SK-N-SH (cell line): ENCODE measurements at regions of chr7 and their contacts with region 1.

Region 1: DNA sequence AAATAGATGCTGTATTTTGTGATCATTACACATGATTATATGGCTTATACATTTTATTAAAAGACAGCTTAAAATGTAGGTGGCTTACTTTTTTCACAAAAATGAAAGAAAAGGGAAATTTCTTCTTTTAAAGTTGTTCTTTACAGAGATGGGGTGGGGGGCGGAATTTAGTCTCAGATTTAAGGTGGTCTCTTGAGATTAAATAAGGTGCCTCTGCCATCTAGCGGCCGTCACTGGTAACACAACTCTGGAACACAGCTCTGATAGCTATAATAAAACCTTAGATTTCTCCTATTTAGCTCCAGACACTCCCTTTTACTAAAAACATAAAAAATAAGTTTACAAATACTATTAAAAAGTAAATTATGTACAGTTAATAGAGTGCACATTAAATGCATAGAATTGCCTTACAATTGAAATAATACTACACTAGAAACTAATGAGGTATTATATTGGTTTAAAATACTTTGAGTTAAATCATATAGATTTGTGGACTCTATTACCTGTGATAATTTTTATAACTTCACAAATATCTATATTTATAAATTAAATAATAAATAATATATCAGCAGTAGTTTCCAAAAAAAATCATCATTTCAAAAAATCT is 210.9 kb downstream of the DGKB start:
- DNase-seq: peak; percentile 59
- H3K4me3 ChIP-seq: no peak overlapping the region; a peak in 1 of 4 replicates
- H3K27ac ChIP-seq: no peak overlapping the region
- H3K4me1 ChIP-seq: peaks cover 0 to 29% of the 10 kb centered on the region in 2 experiments; a peak in 3 of 4 replicates
- H3K27me3 ChIP-seq: no peaks in the 10 kb centered on the region
- CTCF ChIP-seq: peak; percentile 100
- EP300 ChIP-seq: no peak
- RAD21 ChIP-seq: peak; percentile 95

Region 2: GRCh38 chr7:13476881-13477444 is 1214.7 kb before region 1 on chr7:
- CTCF ChIA-PET with region 1: interaction called, 10 read pairs
- POLR2A ChIA-PET with region 1: no interaction called
- DNase-seq: no peak
- H3K4me3 ChIP-seq: no peak overlapping the region
- H3K27ac ChIP-seq: no peak overlapping the region
- H3K4me1 ChIP-seq: no peaks in the 10 kb centered on the region
- H3K27me3 ChIP-seq: no peaks in the 10 kb centered on the region
- CTCF ChIP-seq: peak; percentile 32
- EP300 ChIP-seq: no peak
- RAD21 ChIP-seq: peak; percentile 36

Region 3: DNA sequence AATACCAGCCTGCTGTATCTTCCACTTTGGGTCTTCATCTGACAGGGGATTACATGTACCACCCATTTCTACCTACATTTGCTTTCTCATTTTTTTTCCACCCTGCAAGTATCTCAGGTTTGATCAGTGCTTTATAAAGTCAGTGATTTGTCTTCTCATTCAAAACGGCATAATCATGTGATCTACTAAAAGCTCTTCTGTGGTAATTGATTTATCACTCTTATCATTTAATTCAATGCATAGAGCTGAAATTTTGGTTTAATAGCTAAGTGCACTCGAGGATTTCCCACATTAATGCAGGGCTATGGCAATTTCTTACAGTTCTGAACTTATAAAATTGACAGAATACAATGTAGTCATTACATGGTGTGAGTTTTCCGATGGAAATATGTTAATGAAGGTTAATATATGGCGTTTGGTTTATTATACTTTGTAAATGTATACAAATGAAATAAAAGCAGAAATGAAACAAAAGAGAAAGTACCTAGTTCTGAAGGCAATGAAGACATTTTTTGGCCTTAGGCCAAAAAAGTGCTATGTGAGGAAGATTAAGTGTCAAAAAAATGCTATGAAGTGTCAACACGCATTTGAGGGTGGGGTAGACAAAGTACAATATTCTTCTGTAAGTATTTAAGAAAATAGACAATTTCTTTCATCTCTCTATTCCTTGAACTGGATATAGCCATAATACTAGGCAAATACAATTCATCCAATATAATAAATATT is 1159.5 kb before region 1 on chr7:
- CTCF ChIA-PET with region 1: interaction called, 18 read pairs
- POLR2A ChIA-PET with region 1: no interaction called
- DNase-seq: peak; percentile 1
- H3K4me3 ChIP-seq: no peak overlapping the region
- H3K27ac ChIP-seq: no peak overlapping the region
- H3K4me1 ChIP-seq: peaks cover 0 to 6% of the 10 kb centered on the region in 2 experiments; a peak in 1 of 4 replicates
- H3K27me3 ChIP-seq: no peaks in the 10 kb centered on the region
- CTCF ChIP-seq: no peak
- EP300 ChIP-seq: peak in 1 of 2 experiments; percentile 13; a peak in 1 of 4 replicates
- RAD21 ChIP-seq: no peak

Region 4: DNA sequence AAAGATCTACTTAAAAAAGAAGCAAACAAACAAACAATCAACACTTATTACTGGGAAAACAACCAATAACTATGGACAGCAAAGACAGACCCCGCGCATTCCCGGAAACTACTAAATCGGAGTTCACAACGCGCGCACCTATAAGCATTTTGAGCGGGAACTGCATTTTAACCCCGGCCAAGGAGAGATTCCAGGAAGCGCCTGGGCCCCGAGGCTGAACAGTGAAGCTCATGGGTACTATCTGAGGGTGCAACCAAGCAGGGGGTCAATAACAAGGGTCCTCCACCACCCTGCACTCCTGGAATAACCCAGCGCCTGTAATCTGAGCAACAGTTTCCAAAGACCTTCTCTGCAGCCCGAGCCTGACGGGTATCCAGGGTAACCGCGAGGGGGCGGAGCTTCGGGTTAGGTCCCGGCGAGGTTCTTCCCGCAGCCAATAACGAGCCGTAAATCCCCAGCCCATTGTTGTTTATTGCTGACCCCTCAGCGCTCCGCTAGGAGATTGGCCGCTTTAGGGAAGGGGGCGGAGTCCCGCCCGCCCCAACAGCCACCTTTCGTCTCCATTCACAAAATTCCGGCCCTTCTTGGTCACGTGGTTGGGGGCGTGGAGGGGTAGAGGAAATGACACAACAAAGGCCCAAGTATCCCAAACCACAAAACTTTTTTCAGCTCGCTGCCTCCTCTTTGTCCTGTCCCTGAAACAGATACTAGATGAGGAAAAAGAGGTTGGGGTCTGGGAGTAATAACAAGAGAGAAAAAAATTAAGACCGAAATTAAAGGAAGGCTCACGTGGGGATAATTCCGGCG is 700.5 kb before region 1 on chr7:
- CTCF ChIA-PET with region 1: interaction called, 34 read pairs
- POLR2A ChIA-PET with region 1: no interaction called
- DNase-seq: peak; percentile 92
- H3K4me3 ChIP-seq: peak overlapping the region; percentile 91 to 100
- H3K27ac ChIP-seq: peak overlapping the region; percentile 91 to 96
- H3K4me1 ChIP-seq: peaks cover 3 to 22% of the 10 kb centered on the region in 2 experiments; a peak in 2 of 4 replicates
- H3K27me3 ChIP-seq: no peaks in the 10 kb centered on the region
- CTCF ChIP-seq: no peak
- EP300 ChIP-seq: peak in 1 of 2 experiments; percentile 36; a peak in 1 of 4 replicates
- RAD21 ChIP-seq: no peak

Region 5: DNA sequence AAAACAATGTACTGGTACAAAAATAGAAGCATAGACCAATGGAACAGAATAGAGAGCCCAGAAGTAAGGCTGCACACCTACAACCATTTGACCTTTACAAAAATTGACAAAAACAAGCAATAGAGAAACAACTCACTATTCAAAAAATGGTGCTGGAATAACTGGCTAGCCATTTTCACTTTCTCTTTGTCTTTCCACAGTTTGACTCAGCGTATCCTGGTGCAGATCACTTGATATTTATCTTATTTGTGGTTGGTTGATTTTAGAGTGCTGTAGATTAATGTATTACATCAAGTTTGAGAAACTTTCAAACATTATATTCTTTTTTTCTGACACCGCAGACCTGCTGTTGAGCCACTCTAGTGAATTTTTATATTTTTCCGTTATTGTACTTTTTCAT is 170.5 kb before region 1 on chr7:
- CTCF ChIA-PET with region 1: no interaction called
- POLR2A ChIA-PET with region 1: no interaction called
- DNase-seq: no peak
- H3K4me3 ChIP-seq: no peak overlapping the region
- H3K27ac ChIP-seq: no peak overlapping the region
- H3K4me1 ChIP-seq: no peaks in the 10 kb centered on the region
- H3K27me3 ChIP-seq: no peaks in the 10 kb centered on the region
- CTCF ChIP-seq: no peak
- EP300 ChIP-seq: no peak
- RAD21 ChIP-seq: no peak

Region 6: DNA sequence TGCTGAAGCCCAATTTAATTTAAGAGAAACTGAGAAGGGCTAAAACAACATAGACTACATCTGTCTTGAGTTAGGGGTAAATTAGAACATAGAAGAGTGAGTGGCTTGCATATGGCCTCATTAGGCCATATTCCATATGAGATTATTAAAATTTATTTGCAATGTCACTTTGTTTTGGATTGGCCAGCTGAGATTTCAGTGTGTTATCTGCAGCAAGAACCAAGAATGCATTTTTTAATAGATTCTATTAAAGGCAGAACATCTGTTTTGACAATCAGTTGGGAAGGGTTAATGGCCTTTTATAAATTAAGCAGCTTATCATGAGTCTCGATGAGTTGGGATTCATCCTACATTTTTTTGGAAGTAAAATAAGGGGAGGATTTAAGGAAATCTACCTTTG is 25.4 kb before region 1 on chr7:
- CTCF ChIA-PET with region 1: interaction called, 41 read pairs
- POLR2A ChIA-PET with region 1: no interaction called
- DNase-seq: peak; percentile 55
- H3K4me3 ChIP-seq: no peak overlapping the region
- H3K27ac ChIP-seq: peak overlapping the region in 1 of 2 experiments; percentile 94; a peak in 2 of 4 replicates
- H3K4me1 ChIP-seq: peaks cover 0 to 20% of the 10 kb centered on the region in 2 experiments; a peak in 1 of 4 replicates
- H3K27me3 ChIP-seq: no peaks in the 10 kb centered on the region
- CTCF ChIP-seq: no peak
- EP300 ChIP-seq: peak in 1 of 2 experiments; percentile 100; a peak in 2 of 4 replicates
- RAD21 ChIP-seq: peak; percentile 15; the same call in 1 of the 2 replicates

Region 7: GRCh38 chr7:14717816-14718215 is 26.1 kb after region 1 on chr7:
- CTCF ChIA-PET with region 1: interaction called, 11 read pairs
- POLR2A ChIA-PET with region 1: no interaction called
- DNase-seq: peak; percentile 40
- H3K4me3 ChIP-seq: no peak overlapping the region
- H3K27ac ChIP-seq: no peak overlapping the region
- H3K4me1 ChIP-seq: no peaks in the 10 kb centered on the region
- H3K27me3 ChIP-seq: no peaks in the 10 kb centered on the region
- CTCF ChIP-seq: peak; percentile 97
- EP300 ChIP-seq: no peak
- RAD21 ChIP-seq: peak; percentile 91